ENCODE measurements at regions of chr15 and their contacts with region 1.

Region 1: GRCh38 chr15:101723874-101724674 is at the start of gene TARS3:
- DNase-seq: peak; percentile 94 to 98 (median 96)
- ATAC-seq: peak; percentile 93
- H3K4me3 ChIP-seq: peak within 1 kb of the TSS; percentile 40 to 71
- H3K4me3 Mint-ChIP-seq: peak within 1 kb of the TSS; percentile 90
- H3K27ac ChIP-seq: peak within 1 kb of the TSS; percentile 65 to 87
- H3K27ac Mint-ChIP-seq: peak within 1 kb of the TSS; percentile 90
- H3K4me1 ChIP-seq: peaks cover 18% of the 10 kb centered on the region
- H3K4me1 Mint-ChIP-seq: peaks cover 35% of the 10 kb centered on the region
- H3K27me3 ChIP-seq: no peaks in the 10 kb centered on the region
- H3K27me3 Mint-ChIP-seq: no peaks in the 10 kb centered on the region
- CTCF ChIP-seq: no peak
- total RNA-seq, gene TARS3: 12.7 to 13.7 TPM

Region 2: GRCh38 chr15:100602064-100602822 is 1121.8 kb before region 1 on chr15 and contains the starts of genes ASB7 and LINS1:
- CTCF ChIA-PET with region 1: no interaction called
- POLR2A ChIA-PET with region 1: no interaction called
- intact Hi-C with region 1: loop called (anchors 1 to 10 kb)
- DNase-seq: peak; percentile 99 to 100 (median 100)
- ATAC-seq: peak; percentile 89
- H3K4me3 ChIP-seq: peak within 1 kb of the TSS; percentile 90 to 95
- H3K4me3 Mint-ChIP-seq: no peak within 1 kb of the TSS
- H3K27ac ChIP-seq: peak within 1 kb of the TSS; percentile 71 to 94
- H3K27ac Mint-ChIP-seq: peak within 1 kb of the TSS; percentile 93
- H3K4me1 ChIP-seq: peaks cover 58% of the 10 kb centered on the region
- H3K4me1 Mint-ChIP-seq: peaks cover 64% of the 10 kb centered on the region
- H3K27me3 ChIP-seq: no peaks in the 10 kb centered on the region
- H3K27me3 Mint-ChIP-seq: no peaks in the 10 kb centered on the region
- CTCF ChIP-seq: no peak
- total RNA-seq, gene ASB7: 17.2 to 19.9 TPM
- total RNA-seq, gene LINS1: 42.8 to 45.9 TPM

Region 3: GRCh38 chr15:101138913-101139880 is 584.9 kb before region 1 on chr15:
- CTCF ChIA-PET with region 1: no interaction called
- POLR2A ChIA-PET with region 1: no interaction called
- intact Hi-C with region 1: no loop called
- DNase-seq: no peak
- ATAC-seq: no peak
- H3K4me3 ChIP-seq: no peak overlapping the region
- H3K4me3 Mint-ChIP-seq: no peak overlapping the region
- H3K27ac ChIP-seq: no peak overlapping the region
- H3K27ac Mint-ChIP-seq: no peak overlapping the region
- H3K4me1 ChIP-seq: peaks cover 24% of the 10 kb centered on the region
- H3K4me1 Mint-ChIP-seq: peaks cover 28% of the 10 kb centered on the region
- H3K27me3 ChIP-seq: no peaks in the 10 kb centered on the region
- H3K27me3 Mint-ChIP-seq: no peaks in the 10 kb centered on the region
- CTCF ChIP-seq: no peak

Region 4: GRCh38 chr15:101277038-101277882 is 446.8 kb before region 1 on chr15 and contains the start of gene SELENOS:
- CTCF ChIA-PET with region 1: no interaction called
- POLR2A ChIA-PET with region 1: no interaction called
- intact Hi-C with region 1: loop called in 1 of 2 experiments (anchors 1 kb)
- DNase-seq: peak; percentile 62 to 94 (median 88)
- ATAC-seq: peak; percentile 93
- H3K4me3 ChIP-seq: peak within 1 kb of the TSS; percentile 75 to 77
- H3K4me3 Mint-ChIP-seq: peak within 1 kb of the TSS; percentile 95
- H3K27ac ChIP-seq: peak within 1 kb of the TSS; percentile 65 to 77
- H3K27ac Mint-ChIP-seq: peak within 1 kb of the TSS; percentile 93
- H3K4me1 ChIP-seq: peaks cover 16% of the 10 kb centered on the region
- H3K4me1 Mint-ChIP-seq: peaks cover 24% of the 10 kb centered on the region
- H3K27me3 ChIP-seq: no peaks in the 10 kb centered on the region
- H3K27me3 Mint-ChIP-seq: no peaks in the 10 kb centered on the region
- CTCF ChIP-seq: no peak
- total RNA-seq, gene SELENOS: 46.0 to 50.4 TPM

Region 5: GRCh38 chr15:101333401-101333800 is 390.7 kb before region 1 on chr15:
- CTCF ChIA-PET with region 1: no interaction called
- POLR2A ChIA-PET with region 1: no interaction called
- intact Hi-C with region 1: loop called in 1 of 2 experiments (anchors 5 kb)
- DNase-seq: peak in 2 of 9 experiments; percentile 30 to 42
- ATAC-seq: peak; percentile 21
- H3K4me3 ChIP-seq: peak overlapping the region in 1 of 2 experiments; percentile 33
- H3K4me3 Mint-ChIP-seq: no peak overlapping the region
- H3K27ac ChIP-seq: peak overlapping the region; percentile 81 to 86
- H3K27ac Mint-ChIP-seq: peak overlapping the region; percentile 77
- H3K4me1 ChIP-seq: peaks cover 15% of the 10 kb centered on the region
- H3K4me1 Mint-ChIP-seq: peaks cover 25% of the 10 kb centered on the region
- H3K27me3 ChIP-seq: no peaks in the 10 kb centered on the region
- H3K27me3 Mint-ChIP-seq: no peaks in the 10 kb centered on the region
- CTCF ChIP-seq: no peak

Region 6: DNA sequence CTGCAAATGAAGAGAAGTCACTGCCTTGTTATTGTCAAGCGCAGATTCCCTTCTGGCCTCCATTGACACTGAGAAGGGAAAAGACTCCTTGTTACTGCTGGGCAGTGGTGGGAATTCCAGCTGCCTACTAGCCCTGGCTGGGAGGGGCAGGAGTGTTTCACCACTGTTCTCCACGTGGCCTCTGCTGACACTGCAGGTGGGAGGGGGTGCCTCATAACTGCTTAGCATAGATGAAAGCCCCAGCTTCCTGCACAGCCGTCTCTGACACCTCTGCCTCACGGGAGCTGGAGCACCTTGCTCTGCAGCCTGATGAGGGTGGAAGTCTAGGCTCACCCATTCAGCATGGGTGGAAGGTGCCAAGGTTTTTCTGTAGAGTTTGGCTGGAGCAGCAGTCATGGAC is 124.0 kb before region 1 on chr15:
- CTCF ChIA-PET with region 1: no interaction called
- POLR2A ChIA-PET with region 1: no interaction called
- intact Hi-C with region 1: no loop called
- DNase-seq: no peak
- ATAC-seq: no peak
- H3K4me3 ChIP-seq: no peak overlapping the region
- H3K4me3 Mint-ChIP-seq: no peak overlapping the region
- H3K27ac ChIP-seq: no peak overlapping the region
- H3K27ac Mint-ChIP-seq: no peak overlapping the region
- H3K4me1 ChIP-seq: no peaks in the 10 kb centered on the region
- H3K4me1 Mint-ChIP-seq: no peaks in the 10 kb centered on the region
- H3K27me3 ChIP-seq: peaks cover 0 to 3% of the 10 kb centered on the region in 2 experiments
- H3K27me3 Mint-ChIP-seq: peaks cover 58% of the 10 kb centered on the region
- CTCF ChIP-seq: no peak

Region 7: GRCh38 chr15:101646672-101647071 is 77.4 kb before region 1 on chr15:
- CTCF ChIA-PET with region 1: interaction called, 4 read pairs
- POLR2A ChIA-PET with region 1: interaction called, 7 read pairs
- intact Hi-C with region 1: loop called in 1 of 2 experiments (anchors 1 kb)
- DNase-seq: no peak
- ATAC-seq: no peak
- H3K4me3 ChIP-seq: no peak overlapping the region
- H3K4me3 Mint-ChIP-seq: no peak overlapping the region
- H3K27ac ChIP-seq: no peak overlapping the region
- H3K27ac Mint-ChIP-seq: no peak overlapping the region
- H3K4me1 ChIP-seq: peaks cover 25% of the 10 kb centered on the region
- H3K4me1 Mint-ChIP-seq: peaks cover 56% of the 10 kb centered on the region
- H3K27me3 ChIP-seq: no peaks in the 10 kb centered on the region
- H3K27me3 Mint-ChIP-seq: no peaks in the 10 kb centered on the region
- CTCF ChIP-seq: no peak

Region 8: DNA sequence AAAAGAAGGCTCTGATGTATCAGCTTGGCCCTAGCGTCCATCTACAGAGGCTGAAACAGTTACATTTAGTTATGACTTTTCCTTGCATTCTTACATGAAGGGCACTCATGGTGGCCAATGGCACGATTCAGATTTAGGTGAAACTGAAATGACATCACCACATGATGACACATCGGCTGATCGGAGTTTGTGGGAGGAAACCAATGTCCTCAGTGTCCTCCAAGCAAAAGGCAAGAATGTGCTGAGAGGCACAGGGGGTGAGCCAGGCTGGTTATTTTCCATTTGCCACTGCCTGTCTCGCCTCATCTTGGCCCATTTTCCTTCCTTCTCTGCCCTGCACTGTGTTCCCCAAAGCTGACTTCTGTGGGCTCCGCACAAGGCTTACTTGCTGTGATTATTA is 34.2 kb before region 1 on chr15:
- CTCF ChIA-PET with region 1: no interaction called
- POLR2A ChIA-PET with region 1: no interaction called
- intact Hi-C with region 1: no loop called
- DNase-seq: no peak
- ATAC-seq: no peak
- H3K4me3 ChIP-seq: no peak overlapping the region
- H3K4me3 Mint-ChIP-seq: no peak overlapping the region
- H3K27ac ChIP-seq: no peak overlapping the region
- H3K27ac Mint-ChIP-seq: no peak overlapping the region
- H3K4me1 ChIP-seq: no peaks in the 10 kb centered on the region
- H3K4me1 Mint-ChIP-seq: peaks cover 2% of the 10 kb centered on the region
- H3K27me3 ChIP-seq: no peaks in the 10 kb centered on the region
- H3K27me3 Mint-ChIP-seq: no peaks in the 10 kb centered on the region
- CTCF ChIP-seq: no peak

Region 9: GRCh38 chr15:101710806-101711205 is 13.3 kb before region 1 on chr15:
- CTCF ChIA-PET with region 1: interaction called, 5 read pairs
- POLR2A ChIA-PET with region 1: interaction called, 13 read pairs
- intact Hi-C with region 1: no loop called
- DNase-seq: no peak
- ATAC-seq: no peak
- H3K4me3 ChIP-seq: no peak overlapping the region
- H3K4me3 Mint-ChIP-seq: no peak overlapping the region
- H3K27ac ChIP-seq: no peak overlapping the region
- H3K27ac Mint-ChIP-seq: no peak overlapping the region
- H3K4me1 ChIP-seq: no peaks in the 10 kb centered on the region
- H3K4me1 Mint-ChIP-seq: peaks cover 16% of the 10 kb centered on the region
- H3K27me3 ChIP-seq: no peaks in the 10 kb centered on the region
- H3K27me3 Mint-ChIP-seq: no peaks in the 10 kb centered on the region
- CTCF ChIP-seq: no peak

Measured in CD8-positive, alpha-beta T cell (primary cell).